Caco-2 (cell line): ENCODE measurements at regions of chr2 and their contacts with region 1.

Region 1: GRCh38 chr2:120693121-120693520 is 42.5 kb upstream of the GLI2 start:
- DNase-seq: no peak
- H3K4me3 ChIP-seq: no peak overlapping the region
- H3K4me3 Mint-ChIP-seq: no peak overlapping the region
- H3K27ac Mint-ChIP-seq: no peak overlapping the region
- H3K4me1 ChIP-seq: peaks cover 8% of the 10 kb centered on the region
- H3K4me1 Mint-ChIP-seq: peaks cover 13% of the 10 kb centered on the region
- H3K27me3 ChIP-seq: no peaks in the 10 kb centered on the region
- H3K27me3 Mint-ChIP-seq: peaks cover 12% of the 10 kb centered on the region
- CTCF ChIP-seq: no peak

Region 2: GRCh38 chr2:120735746-120736170 is 42.6 kb after region 1 on chr2 and contains the start of gene GLI2:
- CTCF ChIA-PET with region 1: interaction called, 5 read pairs
- POLR2A ChIA-PET with region 1: no interaction called
- intact Hi-C with region 1: loop called (anchors 1 kb)
- DNase-seq: peak; percentile 78 to 85
- H3K4me3 ChIP-seq: peak within 1 kb of the TSS; percentile 39
- H3K4me3 Mint-ChIP-seq: peak within 1 kb of the TSS; percentile 84
- H3K27ac Mint-ChIP-seq: no peak within 1 kb of the TSS
- H3K4me1 ChIP-seq: peaks cover 3% of the 10 kb centered on the region; the same call in 1 of the 2 replicates
- H3K4me1 Mint-ChIP-seq: peaks cover 9% of the 10 kb centered on the region
- H3K27me3 ChIP-seq: 0 out of 2 replicates have a peak, but pooled peaks cover 3% of the 10 kb centered on the region
- H3K27me3 Mint-ChIP-seq: peaks cover 21% of the 10 kb centered on the region
- CTCF ChIP-seq: peak; percentile 74 to 75
- total RNA-seq, gene GLI2: 0.58 and 0.70 TPM in 2 replicates

Region 3: GRCh38 chr2:120771111-120771947 is 78.2 kb after region 1 on chr2:
- CTCF ChIA-PET with region 1: no interaction called
- POLR2A ChIA-PET with region 1: no interaction called
- intact Hi-C with region 1: no loop called
- DNase-seq: no peak
- H3K4me3 ChIP-seq: no peak overlapping the region
- H3K4me3 Mint-ChIP-seq: no peak overlapping the region
- H3K27ac Mint-ChIP-seq: no peak overlapping the region
- H3K4me1 ChIP-seq: peaks cover 3% of the 10 kb centered on the region
- H3K4me1 Mint-ChIP-seq: peaks cover 5% of the 10 kb centered on the region
- H3K27me3 ChIP-seq: no peaks in the 10 kb centered on the region
- H3K27me3 Mint-ChIP-seq: no peaks in the 10 kb centered on the region
- CTCF ChIP-seq: no peak

Region 4: GRCh38 chr2:120856421-120856862 is 163.3 kb after region 1 on chr2:
- CTCF ChIA-PET with region 1: no interaction called
- POLR2A ChIA-PET with region 1: no interaction called
- intact Hi-C with region 1: loop called (anchors 1 kb)
- DNase-seq: peak; percentile 77 to 82
- H3K4me3 ChIP-seq: no peak overlapping the region
- H3K4me3 Mint-ChIP-seq: no peak overlapping the region
- H3K27ac Mint-ChIP-seq: peak overlapping the region; percentile 55
- H3K4me1 ChIP-seq: peaks cover 10% of the 10 kb centered on the region
- H3K4me1 Mint-ChIP-seq: peaks cover 11% of the 10 kb centered on the region
- H3K27me3 ChIP-seq: no peaks in the 10 kb centered on the region
- H3K27me3 Mint-ChIP-seq: no peaks in the 10 kb centered on the region
- CTCF ChIP-seq: peak; percentile 40 to 61

Region 5: GRCh38 chr2:120949027-120949956 is 256.2 kb after region 1 on chr2:
- CTCF ChIA-PET with region 1: interaction called, 9 read pairs
- POLR2A ChIA-PET with region 1: no interaction called
- intact Hi-C with region 1: loop called (anchors 1 kb)
- DNase-seq: peak in 1 of 2 experiments; percentile 61
- H3K4me3 ChIP-seq: no peak overlapping the region
- H3K4me3 Mint-ChIP-seq: no peak overlapping the region
- H3K27ac Mint-ChIP-seq: no peak overlapping the region
- H3K4me1 ChIP-seq: no peaks in the 10 kb centered on the region
- H3K4me1 Mint-ChIP-seq: peaks cover 6% of the 10 kb centered on the region
- H3K27me3 ChIP-seq: no peaks in the 10 kb centered on the region
- H3K27me3 Mint-ChIP-seq: no peaks in the 10 kb centered on the region
- CTCF ChIP-seq: peak; percentile 51 to 68

Region 6: GRCh38 chr2:121076885-121077549 is 383.9 kb after region 1 on chr2:
- CTCF ChIA-PET with region 1: interaction called, 32 read pairs
- POLR2A ChIA-PET with region 1: interaction called, 9 read pairs
- intact Hi-C with region 1: loop called (anchors 1 kb)
- DNase-seq: peak; percentile 82 to 90
- H3K4me3 ChIP-seq: no peak overlapping the region
- H3K4me3 Mint-ChIP-seq: no peak overlapping the region
- H3K27ac Mint-ChIP-seq: no peak overlapping the region
- H3K4me1 ChIP-seq: peaks cover 20% of the 10 kb centered on the region
- H3K4me1 Mint-ChIP-seq: no peaks in the 10 kb centered on the region
- H3K27me3 ChIP-seq: no peaks in the 10 kb centered on the region
- H3K27me3 Mint-ChIP-seq: no peaks in the 10 kb centered on the region
- CTCF ChIP-seq: peak; percentile 97 to 98